RWPE1 (cell line): ENCODE measurements at regions of chr1 and their contacts with region 1.

Region 1: DNA sequence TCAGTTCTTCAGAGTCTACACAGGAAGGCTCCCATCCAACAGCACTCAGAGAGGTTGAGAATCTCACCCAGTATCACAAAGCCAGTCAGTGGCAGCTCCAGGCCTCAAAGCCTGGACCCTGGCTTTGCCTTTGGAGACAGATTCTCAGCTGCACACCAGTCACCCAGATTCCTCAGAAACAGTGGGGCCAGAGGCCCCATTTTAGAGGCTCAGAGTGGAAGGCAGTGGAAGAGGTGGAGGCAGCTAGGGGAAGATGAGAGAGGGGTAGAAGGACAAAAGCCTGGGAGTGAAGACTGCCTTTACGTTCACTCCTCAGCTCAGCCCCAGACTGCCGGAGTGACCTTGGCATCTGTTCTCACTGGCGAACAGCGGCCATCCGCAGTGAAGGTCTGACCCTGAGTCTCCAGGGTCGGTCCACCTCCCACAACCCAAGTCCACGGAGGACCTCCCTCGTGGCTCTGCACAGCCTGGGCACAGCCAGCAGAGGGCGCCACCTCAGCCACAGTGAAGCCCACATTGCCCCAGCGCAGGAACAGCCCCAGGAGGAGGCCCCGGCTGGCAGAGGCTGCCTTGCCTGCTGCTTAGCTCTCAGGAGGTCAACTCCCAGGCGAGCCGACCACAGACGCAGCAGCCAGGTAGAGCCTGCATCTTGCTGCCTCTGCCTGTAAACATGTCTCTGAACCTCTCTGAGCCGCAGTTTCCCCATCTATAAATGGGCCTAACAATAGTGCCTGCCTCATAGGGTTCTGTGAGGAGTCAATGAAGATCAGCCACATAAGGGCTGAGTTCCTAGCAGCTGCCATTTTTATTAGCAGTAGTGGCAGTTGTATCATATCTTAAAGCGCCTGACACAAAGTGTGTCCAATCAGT is 5.9 kb upstream of the FNDC5 start:
- DNase-seq: peak; percentile 55
- H3K27ac ChIP-seq: no peak overlapping the region
- CTCF ChIP-seq: peak; percentile 79

Region 2: GRCh38 chr1:32948905-32949304 is 72.3 kb after region 1 on chr1:
- CTCF ChIA-PET with region 1: no interaction called
- POLR2A ChIA-PET with region 1: no interaction called
- DNase-seq: no peak
- H3K27ac ChIP-seq: no peak overlapping the region
- CTCF ChIP-seq: no peak

Region 3: DNA sequence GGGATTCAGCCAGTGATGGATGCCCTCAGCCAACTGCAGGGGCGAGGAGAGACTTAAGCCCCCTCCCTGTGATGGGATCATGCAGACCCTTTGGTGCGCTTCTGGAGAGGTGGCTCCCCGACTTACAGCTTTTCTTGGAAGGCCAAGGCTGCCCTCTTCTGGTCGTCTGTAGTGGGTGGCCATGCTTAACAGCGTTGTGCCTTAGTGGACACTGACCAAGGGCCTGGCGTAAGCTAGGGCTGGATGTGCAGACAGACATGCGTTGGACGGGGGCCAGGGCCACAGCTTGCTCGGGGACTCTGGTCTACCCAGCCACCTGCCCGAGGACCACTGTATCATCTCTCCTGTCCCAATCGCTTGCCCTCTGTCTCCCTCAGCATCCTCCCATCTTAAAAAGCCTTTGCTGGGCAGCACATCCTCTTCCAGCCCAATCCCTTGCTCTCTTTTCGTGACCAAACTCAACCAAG is 209.8 kb after region 1 on chr1:
- CTCF ChIA-PET with region 1: interaction called, 14 read pairs
- POLR2A ChIA-PET with region 1: no interaction called
- DNase-seq: no peak
- H3K27ac ChIP-seq: no peak overlapping the region
- CTCF ChIP-seq: peak; percentile 72